CD4-positive, alpha-beta T cell (primary cell): ENCODE measurements at regions of chr17 and their contacts with region 1.

Region 1: GRCh38 chr17:7351665-7352501 is at the start of gene KCTD11:
- DNase-seq: peak; percentile 45 to 91 (median 70)
- ATAC-seq: peak; percentile 58
- H3K4me3 ChIP-seq: peak within 1 kb of the TSS; percentile 66
- H3K4me3 Mint-ChIP-seq: peak within 1 kb of the TSS; percentile 90
- H3K27ac ChIP-seq: peak within 1 kb of the TSS; percentile 69 to 75
- H3K27ac Mint-ChIP-seq: peak within 1 kb of the TSS; percentile 86
- H3K4me1 ChIP-seq: peaks cover 59% of the 10 kb centered on the region
- H3K4me1 Mint-ChIP-seq: peaks cover 49% of the 10 kb centered on the region
- H3K27me3 ChIP-seq: no peaks in the 10 kb centered on the region
- H3K27me3 Mint-ChIP-seq: no peaks in the 10 kb centered on the region
- CTCF ChIP-seq: no peak
- total RNA-seq, gene KCTD11: 1.3 to 1.6 TPM

Region 2: DNA sequence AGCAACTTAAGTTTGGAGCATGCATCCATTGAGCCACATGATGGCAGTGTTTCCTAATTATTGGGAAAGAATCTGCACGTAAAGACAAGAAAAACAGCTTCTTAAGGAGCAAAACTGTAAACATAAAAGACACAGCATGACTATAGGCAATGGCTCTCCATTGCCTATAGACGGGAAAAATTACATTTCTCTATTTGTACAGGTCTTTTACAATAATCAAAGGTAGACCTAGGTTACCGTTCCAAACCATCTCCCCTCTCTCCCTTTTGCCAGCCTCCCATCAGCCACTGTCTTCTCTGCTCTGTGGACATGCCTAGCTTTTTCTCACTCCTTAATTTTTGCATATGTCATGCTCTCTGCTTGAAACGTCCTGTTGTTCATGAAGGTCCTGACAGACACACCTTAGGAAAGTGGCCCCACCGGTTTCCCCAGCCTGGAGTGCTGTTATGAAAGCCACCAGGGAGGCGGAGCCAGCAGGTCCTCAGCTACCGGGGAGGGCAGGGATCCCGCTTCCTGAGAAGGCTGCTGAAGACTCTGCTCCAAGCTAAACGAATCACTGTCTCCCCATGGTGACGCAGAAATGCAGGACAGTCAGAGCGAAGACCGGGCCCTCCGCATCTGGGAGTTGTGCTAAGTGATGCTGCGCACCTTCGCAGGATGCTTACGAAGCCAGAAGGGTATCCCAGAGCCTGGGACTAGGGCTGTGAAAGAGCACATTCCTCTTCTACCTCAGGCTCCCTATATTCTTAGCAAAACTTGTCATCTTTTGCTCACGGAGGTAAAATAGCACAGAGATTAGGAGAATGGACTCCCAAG is 305.8 kb before region 1 on chr17:
- CTCF ChIA-PET with region 1: interaction called, 3 read pairs
- POLR2A ChIA-PET with region 1: no interaction called
- intact Hi-C with region 1: loop called (anchors 5 kb)
- DNase-seq: peak in 9 of 14 experiments; percentile 31 to 89 (median 49)
- ATAC-seq: peak; percentile 53
- H3K4me3 ChIP-seq: peak overlapping the region; percentile 55
- H3K4me3 Mint-ChIP-seq: peak overlapping the region; percentile 90
- H3K27ac ChIP-seq: peak overlapping the region; percentile 64 to 68
- H3K27ac Mint-ChIP-seq: peak overlapping the region; percentile 94
- H3K4me1 ChIP-seq: peaks cover 49% of the 10 kb centered on the region
- H3K4me1 Mint-ChIP-seq: peaks cover 44% of the 10 kb centered on the region
- H3K27me3 ChIP-seq: peaks cover 0 to 5% of the 10 kb centered on the region in 2 experiments
- H3K27me3 Mint-ChIP-seq: no peaks in the 10 kb centered on the region
- CTCF ChIP-seq: peak; percentile 80

Region 3: GRCh38 chr17:7323731-7324437 is 28.0 kb before region 1 on chr17:
- CTCF ChIA-PET with region 1: interaction called, 6 read pairs
- POLR2A ChIA-PET with region 1: interaction called, 26 read pairs
- intact Hi-C with region 1: loop called (anchors 2 kb)
- DNase-seq: peak; percentile 45 to 79 (median 64)
- ATAC-seq: peak; percentile 52
- H3K4me3 ChIP-seq: no peak overlapping the region
- H3K4me3 Mint-ChIP-seq: peak overlapping the region; percentile 42
- H3K27ac ChIP-seq: no peak overlapping the region
- H3K27ac Mint-ChIP-seq: no peak overlapping the region
- H3K4me1 ChIP-seq: peaks cover 27% of the 10 kb centered on the region
- H3K4me1 Mint-ChIP-seq: peaks cover 16% of the 10 kb centered on the region
- H3K27me3 ChIP-seq: no peaks in the 10 kb centered on the region
- H3K27me3 Mint-ChIP-seq: no peaks in the 10 kb centered on the region
- CTCF ChIP-seq: peak; percentile 88

Region 4: GRCh38 chr17:7336240-7337175 is 15.4 kb before region 1 on chr17 and contains the start of gene ACAP1:
- CTCF ChIA-PET with region 1: interaction called, 12 read pairs
- POLR2A ChIA-PET with region 1: interaction called, 96 read pairs
- intact Hi-C with region 1: loop called in 1 of 2 experiments (anchors 2 kb)
- DNase-seq: peak; percentile 75 to 95 (median 90)
- ATAC-seq: peak; percentile 96
- H3K4me3 ChIP-seq: peak within 1 kb of the TSS; percentile 91
- H3K4me3 Mint-ChIP-seq: peak within 1 kb of the TSS; percentile 89
- H3K27ac ChIP-seq: peak within 1 kb of the TSS; percentile 55 to 64
- H3K27ac Mint-ChIP-seq: peak within 1 kb of the TSS; percentile 91
- H3K4me1 ChIP-seq: peaks cover 88% of the 10 kb centered on the region
- H3K4me1 Mint-ChIP-seq: peaks cover 52% of the 10 kb centered on the region
- H3K27me3 ChIP-seq: no peaks in the 10 kb centered on the region
- H3K27me3 Mint-ChIP-seq: no peaks in the 10 kb centered on the region
- CTCF ChIP-seq: no peak
- total RNA-seq, gene ACAP1: 565 to 575 TPM

Region 5: GRCh38 chr17:7416323-7416722 is 64.4 kb after region 1 on chr17:
- CTCF ChIA-PET with region 1: no interaction called
- POLR2A ChIA-PET with region 1: no interaction called
- intact Hi-C with region 1: loop called in 1 of 2 experiments (anchors 5 kb)
- DNase-seq: peak in 3 of 14 experiments; percentile 16 to 42 (median 32)
- ATAC-seq: peak; percentile 32
- H3K4me3 ChIP-seq: no peak overlapping the region
- H3K4me3 Mint-ChIP-seq: no peak overlapping the region
- H3K27ac ChIP-seq: no peak overlapping the region
- H3K27ac Mint-ChIP-seq: no peak overlapping the region
- H3K4me1 ChIP-seq: no peaks in the 10 kb centered on the region
- H3K4me1 Mint-ChIP-seq: no peaks in the 10 kb centered on the region
- H3K27me3 ChIP-seq: no peaks in the 10 kb centered on the region
- H3K27me3 Mint-ChIP-seq: no peaks in the 10 kb centered on the region
- CTCF ChIP-seq: no peak

Region 6: GRCh38 chr17:7561028-7561575 is 209.2 kb after region 1 on chr17:
- CTCF ChIA-PET with region 1: interaction called, 14 read pairs
- POLR2A ChIA-PET with region 1: interaction called, 13 read pairs
- intact Hi-C with region 1: loop called (anchors 2 kb)
- DNase-seq: peak; percentile 62 to 89 (median 77)
- ATAC-seq: peak; percentile 62
- H3K4me3 ChIP-seq: peak overlapping the region; percentile 91
- H3K4me3 Mint-ChIP-seq: peak overlapping the region; percentile 95
- H3K27ac ChIP-seq: peak overlapping the region; percentile 88 to 96
- H3K27ac Mint-ChIP-seq: peak overlapping the region; percentile 93
- H3K4me1 ChIP-seq: peaks cover 66% of the 10 kb centered on the region
- H3K4me1 Mint-ChIP-seq: peaks cover 40% of the 10 kb centered on the region
- H3K27me3 ChIP-seq: no peaks in the 10 kb centered on the region
- H3K27me3 Mint-ChIP-seq: no peaks in the 10 kb centered on the region
- CTCF ChIP-seq: peak; percentile 89